Activated CD4-positive, alpha-beta T cell treated with anti-CD3 and anti-CD28 coated beads, Interleukin-2, amount 10 ng/mL, durations not matched to agents 7 days and 5 days (primary cell): ENCODE measurements at regions of chr19 and their contacts with region 1.

Region 1: DNA sequence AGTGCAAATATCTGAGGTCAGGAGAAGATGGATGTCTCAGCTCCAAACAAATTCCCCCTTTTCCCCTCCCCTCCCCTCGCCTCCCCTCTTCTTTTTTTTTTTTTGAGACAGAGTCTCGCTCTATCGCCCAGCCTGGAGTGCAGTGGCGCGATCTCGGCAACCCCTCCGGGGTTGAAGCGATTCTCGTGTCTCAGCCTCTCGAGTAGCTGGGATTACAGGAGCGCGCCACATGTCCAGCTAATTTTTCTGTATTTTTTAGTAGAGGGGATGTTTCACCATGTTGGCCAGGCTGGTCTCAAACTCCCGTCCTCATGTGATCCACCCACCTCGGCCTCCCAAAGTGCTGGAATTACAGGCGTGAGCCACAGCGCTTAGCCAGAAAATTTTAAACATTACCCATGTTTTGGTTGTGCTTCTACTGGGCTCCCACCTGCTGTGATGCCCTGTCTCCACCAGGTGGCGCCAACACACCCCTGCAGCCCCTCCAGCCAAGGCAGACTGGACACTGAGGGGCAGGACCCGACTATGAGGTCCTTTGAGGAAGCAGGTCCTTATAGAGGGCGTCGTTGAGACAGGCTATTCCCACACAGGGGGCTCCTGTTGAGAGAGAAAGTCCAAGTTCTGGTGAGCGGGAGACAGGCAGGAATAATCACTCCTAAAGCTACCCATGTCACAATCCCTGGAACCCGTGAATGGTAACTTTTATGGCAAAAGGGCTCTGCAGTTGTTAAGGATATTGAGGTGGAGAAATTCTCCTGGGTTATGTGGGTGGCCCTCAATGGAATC is 6.3 kb downstream of the ERICH4 start:
- DNase-seq: peak; percentile 75
- H3K4me3 Mint-ChIP-seq: peak overlapping the region; percentile 69
- H3K27ac Mint-ChIP-seq: no peak overlapping the region
- H3K4me1 Mint-ChIP-seq: peaks cover 33% of the 10 kb centered on the region
- H3K27me3 Mint-ChIP-seq: peaks cover 10% of the 10 kb centered on the region

Region 2: DNA sequence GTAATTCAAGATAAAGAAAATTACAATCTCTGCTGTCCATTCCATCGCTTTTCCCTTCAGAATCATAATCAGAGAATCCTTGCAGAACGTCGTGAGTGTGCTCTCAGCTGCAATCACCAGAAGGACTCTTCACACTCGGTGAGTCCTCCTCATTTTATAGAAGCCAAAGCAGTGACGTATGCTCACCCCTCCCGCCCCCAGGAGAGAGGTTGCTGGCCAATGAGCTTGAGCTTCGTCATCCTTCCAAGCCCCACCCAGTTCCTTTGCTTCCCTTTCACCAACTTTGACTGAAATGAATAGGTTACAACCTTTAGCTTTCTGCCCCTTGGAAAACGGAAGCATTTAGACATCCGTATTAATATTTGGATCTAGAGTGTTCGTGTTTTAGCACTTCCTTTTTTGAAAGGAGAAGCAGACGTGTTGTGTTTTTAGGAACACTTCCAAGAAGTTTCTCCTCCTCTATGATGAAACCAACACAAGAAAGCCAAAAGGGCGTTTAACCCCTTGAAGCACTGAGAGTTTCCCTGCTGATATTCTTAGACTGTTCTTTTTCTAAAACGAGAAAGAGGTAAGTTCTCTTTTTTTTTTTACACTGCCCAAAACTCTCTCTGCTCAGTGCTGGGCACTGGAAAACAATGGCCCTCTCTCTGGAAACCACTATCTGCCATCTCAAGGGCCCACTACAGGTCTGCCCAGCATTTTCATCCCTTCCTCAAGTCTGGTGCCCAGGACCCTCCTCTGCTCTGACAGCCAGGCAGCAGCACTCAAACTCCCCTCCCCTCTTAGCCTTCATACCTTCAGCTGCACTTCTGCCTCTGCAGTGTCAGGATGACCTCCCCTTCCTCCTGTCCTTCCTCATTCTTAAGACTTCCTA is 82.4 kb after region 1 on chr19:
- CTCF ChIA-PET with region 1: interaction called, 11 read pairs
- POLR2A ChIA-PET with region 1: no interaction called
- DNase-seq: peak; percentile 86
- H3K4me3 Mint-ChIP-seq: peak overlapping the region; percentile 67
- H3K27ac Mint-ChIP-seq: peak overlapping the region; percentile 90
- H3K4me1 Mint-ChIP-seq: peaks cover 67% of the 10 kb centered on the region
- H3K27me3 Mint-ChIP-seq: peaks cover 23% of the 10 kb centered on the region

Region 3: DNA sequence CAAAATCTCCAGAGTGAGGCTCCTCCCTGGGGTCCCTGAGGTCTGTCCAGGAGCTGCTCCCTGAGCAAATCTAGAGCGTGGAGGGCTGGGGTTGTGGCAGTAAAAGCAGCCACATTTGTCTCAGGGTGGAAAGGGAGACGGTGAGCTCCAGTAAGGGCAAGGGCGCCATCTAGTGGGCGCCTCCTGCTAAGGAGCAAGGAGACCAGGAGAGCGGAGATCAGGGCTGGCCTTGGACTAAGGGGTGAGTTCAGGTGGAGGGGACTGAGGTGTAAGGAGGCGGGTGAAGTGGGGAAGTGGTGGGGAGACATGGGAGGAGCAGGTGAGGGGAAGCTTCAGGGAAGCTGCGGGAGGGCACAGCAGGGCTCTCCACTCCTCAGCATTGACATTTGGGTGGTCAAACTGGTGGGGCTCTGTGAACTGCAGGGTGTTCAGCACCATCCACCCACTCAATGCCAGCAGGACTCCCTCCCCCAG is 121.4 kb after region 1 on chr19:
- CTCF ChIA-PET with region 1: interaction called, 16 read pairs
- POLR2A ChIA-PET with region 1: no interaction called
- DNase-seq: peak; percentile 86
- H3K4me3 Mint-ChIP-seq: no peak overlapping the region
- H3K27ac Mint-ChIP-seq: no peak overlapping the region
- H3K4me1 Mint-ChIP-seq: peaks cover 23% of the 10 kb centered on the region
- H3K27me3 Mint-ChIP-seq: no peaks in the 10 kb centered on the region